ENCODE measurements at regions of chr22 and their contacts with region 1.

Region 1: DNA sequence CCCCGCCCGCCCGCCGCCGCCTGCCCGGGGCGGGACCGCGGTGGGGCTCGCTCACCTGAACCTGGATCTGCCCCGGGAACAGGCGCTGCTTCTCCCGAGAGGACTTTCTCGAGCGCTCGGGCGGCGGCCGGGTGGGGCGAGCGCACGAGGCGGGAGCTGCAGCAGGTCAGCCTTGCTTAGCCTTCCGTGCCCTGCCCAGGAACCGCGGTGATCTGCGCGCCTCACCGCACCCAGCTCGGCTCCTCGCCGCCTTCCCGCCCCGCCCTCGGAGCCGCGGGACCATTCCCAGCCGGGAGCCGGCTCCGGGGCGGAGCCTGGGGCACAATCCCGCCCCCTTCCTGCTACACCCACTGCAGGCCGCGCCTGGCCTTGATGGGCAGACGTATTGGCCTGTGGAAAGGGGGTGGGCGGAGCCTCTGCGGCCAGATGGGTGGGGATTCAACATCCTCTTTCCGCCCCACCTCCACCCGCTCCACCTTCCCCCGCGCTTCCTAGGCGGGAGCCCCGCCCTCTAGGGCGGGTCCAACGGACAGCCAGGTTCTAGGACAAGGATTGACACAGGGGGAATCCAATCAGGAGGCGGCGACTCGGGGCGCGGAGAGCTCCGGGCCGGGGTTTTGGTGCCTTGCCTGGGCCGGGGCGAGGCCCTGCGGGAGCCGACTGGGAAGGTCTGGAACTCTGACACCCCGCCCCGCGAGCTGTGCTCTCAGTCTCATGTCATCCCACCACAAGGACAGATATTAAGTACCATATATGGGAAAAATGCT is at the start of gene MYH9:
- DNase-seq: peak; percentile 100
- H3K4me3 Mint-ChIP-seq: peak within 1 kb of the TSS; percentile 95
- H3K27ac Mint-ChIP-seq: peak within 1 kb of the TSS; percentile 97
- H3K4me1 Mint-ChIP-seq: peaks cover 32% of the 10 kb centered on the region
- H3K27me3 Mint-ChIP-seq: no peaks in the 10 kb centered on the region
- total RNA-seq, gene MYH9: 712 to 720 TPM

Region 2: GRCh38 chr22:36136475-36136874 is 251.5 kb before region 1 on chr22:
- CTCF ChIA-PET with region 1: no interaction called
- POLR2A ChIA-PET with region 1: no interaction called
- intact Hi-C with region 1: no loop called
- DNase-seq: no peak
- H3K4me3 Mint-ChIP-seq: no peak overlapping the region
- H3K27ac Mint-ChIP-seq: no peak overlapping the region
- H3K4me1 Mint-ChIP-seq: peaks cover 21% of the 10 kb centered on the region
- H3K27me3 Mint-ChIP-seq: no peaks in the 10 kb centered on the region

Region 3: DNA sequence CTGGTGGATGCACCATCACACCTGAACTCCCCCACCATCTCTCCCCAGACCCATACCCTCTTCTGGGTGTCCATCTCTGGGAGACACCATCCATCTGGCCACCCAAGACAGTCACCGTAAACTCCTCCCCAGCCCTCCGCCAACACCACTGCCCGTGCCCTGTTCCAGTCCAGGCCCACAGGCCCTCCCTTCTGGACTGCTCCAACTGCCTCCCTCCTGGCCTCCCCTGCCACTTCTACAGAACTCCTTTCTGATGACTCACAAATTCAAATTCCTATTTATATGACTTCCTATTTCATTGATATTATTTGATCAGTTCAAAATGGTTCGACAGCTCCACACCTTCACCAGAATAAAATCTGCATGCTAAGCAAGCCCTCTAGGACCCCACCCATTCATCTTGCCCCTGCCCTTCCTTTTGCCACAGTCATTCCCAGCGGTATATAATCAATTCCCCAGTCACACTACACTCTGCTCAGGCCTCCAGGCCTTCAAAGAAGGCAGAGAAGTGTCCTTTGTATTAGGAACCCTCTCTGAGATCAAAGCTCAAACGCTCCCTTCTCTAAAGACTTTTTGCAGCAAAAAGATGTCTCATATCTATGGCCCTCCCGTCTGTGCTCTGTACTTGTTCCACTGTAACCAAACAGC is 29.3 kb before region 1 on chr22:
- CTCF ChIA-PET with region 1: interaction called, 4 read pairs
- POLR2A ChIA-PET with region 1: interaction called, 8 read pairs
- intact Hi-C with region 1: loop called (anchors 1 kb)
- DNase-seq: no peak
- H3K4me3 Mint-ChIP-seq: peak overlapping the region; percentile 47
- H3K27ac Mint-ChIP-seq: peak overlapping the region; percentile 88
- H3K4me1 Mint-ChIP-seq: peaks cover 97% of the 10 kb centered on the region
- H3K27me3 Mint-ChIP-seq: no peaks in the 10 kb centered on the region

Region 4: GRCh38 chr22:36374603-36375024 is 13.3 kb before region 1 on chr22:
- CTCF ChIA-PET with region 1: interaction called, 34 read pairs
- POLR2A ChIA-PET with region 1: interaction called, 12 read pairs
- intact Hi-C with region 1: loop called (anchors 1 kb)
- DNase-seq: peak; percentile 86
- H3K4me3 Mint-ChIP-seq: peak overlapping the region; percentile 48
- H3K27ac Mint-ChIP-seq: peak overlapping the region; percentile 93
- H3K4me1 Mint-ChIP-seq: peaks cover 97% of the 10 kb centered on the region
- H3K27me3 Mint-ChIP-seq: no peaks in the 10 kb centered on the region

Region 5: DNA sequence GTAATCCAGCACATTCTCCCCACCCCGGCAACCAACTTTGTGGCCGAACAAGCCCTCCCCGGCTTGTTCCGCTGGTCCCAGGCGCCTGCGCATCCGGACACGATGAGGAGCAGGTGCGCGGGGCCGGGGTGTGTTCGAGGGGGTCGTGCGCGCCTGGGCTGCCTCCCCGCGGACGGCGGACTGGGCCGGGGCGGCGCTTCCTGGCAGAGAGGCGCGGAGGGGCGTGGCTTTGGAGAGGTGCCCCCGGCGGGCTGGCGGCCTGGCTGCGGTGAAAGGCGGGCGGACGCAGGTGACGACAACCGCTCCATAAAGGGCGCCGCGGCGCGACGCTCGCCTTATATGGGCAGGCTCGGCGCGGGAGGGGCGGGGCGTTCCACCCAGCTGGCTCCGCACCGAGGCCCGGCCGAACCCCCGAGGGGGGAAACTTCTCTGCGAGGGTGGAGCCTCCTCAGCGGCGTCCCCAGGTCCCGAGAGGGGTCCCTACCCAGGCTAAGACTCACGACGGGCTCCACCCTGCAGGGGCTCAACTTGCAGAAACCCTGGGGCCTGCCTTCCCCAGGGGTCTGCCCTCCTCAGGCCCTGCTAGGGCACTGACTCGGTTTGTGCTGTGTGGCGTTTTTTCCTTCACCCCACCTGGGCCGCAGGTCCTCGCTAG is 67.1 kb after region 1 on chr22:
- CTCF ChIA-PET with region 1: no interaction called
- POLR2A ChIA-PET with region 1: interaction called, 4 read pairs
- intact Hi-C with region 1: loop called (anchors 1 kb)
- DNase-seq: peak; percentile 97
- H3K4me3 Mint-ChIP-seq: peak overlapping the region; percentile 74
- H3K27ac Mint-ChIP-seq: peak overlapping the region; percentile 77
- H3K4me1 Mint-ChIP-seq: peaks cover 39% of the 10 kb centered on the region
- H3K27me3 Mint-ChIP-seq: no peaks in the 10 kb centered on the region

Region 6: DNA sequence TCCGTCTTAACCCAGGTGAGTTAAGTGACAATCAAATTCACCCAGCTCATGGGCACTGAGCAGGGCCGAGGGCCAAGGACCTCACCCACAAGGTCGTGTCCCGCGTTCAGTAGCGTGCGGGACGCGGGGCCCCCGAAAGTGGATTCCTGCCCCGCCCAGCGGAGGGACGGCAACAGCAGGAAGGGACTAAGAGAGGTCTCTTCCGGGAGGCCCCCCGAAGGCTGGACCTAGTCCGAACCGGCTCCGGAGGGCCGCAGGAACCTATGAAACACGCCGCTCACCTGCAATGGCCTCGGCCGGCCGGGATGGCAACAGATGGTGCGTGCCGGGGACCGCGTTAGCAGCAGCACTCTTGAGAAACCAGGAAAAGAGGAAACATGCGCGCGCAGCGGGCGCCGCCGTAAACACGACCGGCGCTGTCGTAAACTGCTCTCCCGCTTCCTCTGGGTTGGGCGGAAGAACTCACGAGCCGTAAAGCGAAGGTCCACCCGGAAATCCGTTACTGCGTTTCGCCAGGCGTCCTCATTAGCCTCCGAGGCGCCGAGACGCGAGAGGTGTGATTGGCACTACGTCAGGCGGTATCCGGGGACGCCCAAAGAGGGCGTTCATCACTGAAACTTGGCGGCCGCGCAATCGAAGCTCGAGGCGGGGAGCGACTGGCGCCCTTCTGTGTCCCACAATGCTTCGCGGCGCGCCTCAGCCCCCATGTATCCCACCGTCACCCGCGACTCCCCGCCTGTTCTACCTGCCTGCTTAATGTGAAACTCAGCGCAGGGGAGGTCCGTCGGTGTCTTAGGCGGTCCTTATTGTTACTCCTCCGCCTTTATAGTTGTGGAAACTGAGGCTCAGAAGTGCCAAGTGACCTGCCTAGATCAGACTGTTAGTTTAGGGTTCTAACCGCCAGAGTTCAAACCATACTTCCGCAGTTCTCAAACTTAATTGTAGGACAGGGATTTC is 141.1 kb after region 1 on chr22 and contains the start of gene EIF3D:
- CTCF ChIA-PET with region 1: no interaction called
- POLR2A ChIA-PET with region 1: interaction called, 3 read pairs
- intact Hi-C with region 1: loop called (anchors 1 kb)
- DNase-seq: peak; percentile 99
- H3K4me3 Mint-ChIP-seq: peak within 1 kb of the TSS; percentile 95
- H3K27ac Mint-ChIP-seq: peak within 1 kb of the TSS; percentile 98
- H3K4me1 Mint-ChIP-seq: peaks cover 20% of the 10 kb centered on the region
- H3K27me3 Mint-ChIP-seq: peaks cover 1% of the 10 kb centered on the region
- total RNA-seq, gene EIF3D: 314 to 321 TPM

Measured in activated CD4-positive, alpha-beta memory T cell treated with anti-CD3 and anti-CD28 coated beads for 36 hours (primary cell).